ENCODE measurements at regions of chrX and their contacts with region 1.

Region 1: GRCh38 chrX:46796574-46797191 is 37.8 kb upstream of the SLC9A7 start:
- DNase-seq: peak; percentile 51
- H3K4me3 Mint-ChIP-seq: no peak overlapping the region
- H3K27ac Mint-ChIP-seq: no peak overlapping the region
- H3K4me1 Mint-ChIP-seq: peaks cover 18% of the 10 kb centered on the region
- H3K27me3 Mint-ChIP-seq: no peaks in the 10 kb centered on the region

Region 2: GRCh38 chrX:46381630-46382029 is 415.1 kb before region 1 on chrX:
- intact Hi-C with region 1: loop called (anchors 1 kb)
- DNase-seq: peak; percentile 0
- H3K4me3 Mint-ChIP-seq: no peak overlapping the region
- H3K27ac Mint-ChIP-seq: no peak overlapping the region
- H3K4me1 Mint-ChIP-seq: no peaks in the 10 kb centered on the region
- H3K27me3 Mint-ChIP-seq: peaks cover 3% of the 10 kb centered on the region

Region 3: DNA sequence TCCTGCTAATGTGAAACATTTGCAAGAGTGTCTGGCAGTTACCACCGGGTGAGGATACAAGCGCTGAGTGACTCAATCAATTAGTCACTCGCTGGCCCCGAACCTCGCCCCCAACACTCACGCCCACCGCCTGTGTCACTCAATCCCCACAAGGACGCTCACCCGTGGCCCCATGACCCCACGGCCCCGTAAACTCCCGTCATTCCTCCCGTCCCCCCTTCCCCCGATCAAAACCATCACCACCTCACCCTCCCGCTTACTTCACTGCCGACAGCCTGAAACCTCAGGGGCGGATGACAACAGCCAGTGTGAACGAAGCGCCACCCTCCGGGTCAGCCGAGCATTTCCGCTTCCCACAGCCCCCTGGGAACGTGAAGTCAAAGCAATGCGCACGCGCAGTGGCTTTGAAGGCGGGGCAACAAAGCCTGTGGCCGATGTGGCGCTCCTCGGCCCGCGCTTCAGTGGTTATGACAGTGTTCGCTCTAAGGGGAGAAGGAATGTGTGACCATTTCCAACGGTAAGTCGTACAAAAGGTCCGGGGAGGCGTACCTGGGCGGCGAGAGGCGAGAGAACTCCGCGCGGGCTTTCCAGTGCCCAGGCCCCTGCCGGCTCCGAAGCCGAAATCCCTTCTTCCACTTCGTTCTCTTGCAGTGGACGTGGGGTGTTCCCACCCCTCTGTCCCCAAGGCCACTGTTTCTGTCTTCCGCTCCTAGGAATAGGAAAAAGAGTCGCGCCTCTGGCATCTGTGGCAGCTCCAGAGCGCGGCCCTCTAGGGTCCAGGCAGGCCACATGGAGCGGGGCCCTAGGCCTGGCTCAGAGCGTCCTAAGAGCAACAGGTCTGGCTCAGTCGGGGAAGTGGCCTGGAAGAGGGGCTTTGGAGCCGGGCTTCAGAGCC is 251.3 kb before region 1 on chrX and contains the start of gene ZNF674:
- intact Hi-C with region 1: loop called (anchors 2 kb)
- DNase-seq: peak; percentile 90
- H3K4me3 Mint-ChIP-seq: peak within 1 kb of the TSS; percentile 97
- H3K27ac Mint-ChIP-seq: peak within 1 kb of the TSS; percentile 97
- H3K4me1 Mint-ChIP-seq: peaks cover 36% of the 10 kb centered on the region
- H3K27me3 Mint-ChIP-seq: no peaks in the 10 kb centered on the region
- total RNA-seq, gene ZNF674: 1.8 and 3.5 TPM in 2 replicates

Region 4: DNA sequence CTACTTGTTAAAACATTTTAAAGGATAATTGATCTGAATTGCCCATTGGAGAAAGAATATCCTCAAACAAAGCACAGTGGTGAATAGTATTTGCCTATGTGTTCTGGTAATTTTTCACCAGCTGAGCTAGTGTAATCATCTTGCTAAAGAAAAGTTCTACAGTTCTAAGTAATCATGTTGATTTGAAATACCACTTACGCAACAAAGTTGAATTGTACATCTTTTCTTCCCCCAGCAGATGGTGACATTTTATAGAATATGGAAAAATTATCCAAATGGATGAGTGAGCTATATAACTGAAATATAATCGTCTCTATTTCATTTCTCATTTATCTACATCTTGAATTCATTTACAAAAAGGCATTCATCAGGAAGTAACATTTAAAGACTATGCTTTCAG is 241.7 kb before region 1 on chrX:
- intact Hi-C with region 1: loop called (anchors 1 kb)
- DNase-seq: no peak
- H3K4me3 Mint-ChIP-seq: no peak overlapping the region
- H3K27ac Mint-ChIP-seq: no peak overlapping the region
- H3K4me1 Mint-ChIP-seq: no peaks in the 10 kb centered on the region
- H3K27me3 Mint-ChIP-seq: no peaks in the 10 kb centered on the region

Region 5: GRCh38 chrX:46653482-46653881 is 143.2 kb before region 1 on chrX:
- intact Hi-C with region 1: loop called (anchors 1 kb)
- DNase-seq: no peak
- H3K4me3 Mint-ChIP-seq: no peak overlapping the region
- H3K27ac Mint-ChIP-seq: no peak overlapping the region
- H3K4me1 Mint-ChIP-seq: no peaks in the 10 kb centered on the region
- H3K27me3 Mint-ChIP-seq: no peaks in the 10 kb centered on the region

Region 6: DNA sequence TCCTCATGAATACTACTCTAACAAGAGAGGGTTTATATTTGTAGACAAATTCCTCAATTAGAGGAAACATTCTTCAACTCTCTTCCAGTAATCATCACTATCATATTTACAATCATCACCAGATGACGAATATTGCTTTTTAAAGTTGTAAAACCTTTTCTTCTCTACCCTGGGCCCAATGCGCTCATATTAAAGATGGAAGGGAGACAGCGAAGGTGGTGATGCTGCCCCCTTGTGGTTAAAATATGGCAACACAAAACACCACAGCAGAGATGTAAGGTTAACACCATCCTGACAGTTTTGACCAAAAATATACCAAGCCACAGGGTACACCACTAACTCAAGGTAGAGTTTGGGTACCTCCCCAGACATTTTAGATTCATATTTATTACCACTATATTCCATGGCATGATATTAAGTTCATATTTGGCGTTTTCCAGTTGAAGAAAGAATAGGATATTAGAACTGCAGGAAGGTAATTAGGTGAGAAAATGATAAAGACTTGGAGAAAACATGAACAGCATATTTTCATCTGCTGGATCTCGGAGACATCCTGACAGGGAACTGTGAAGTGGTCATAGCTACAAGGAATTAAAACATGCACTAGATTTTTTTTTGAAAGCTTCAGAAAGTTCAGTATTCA is 110.6 kb before region 1 on chrX:
- intact Hi-C with region 1: loop called (anchors 1 kb)
- DNase-seq: peak; percentile 4
- H3K4me3 Mint-ChIP-seq: no peak overlapping the region
- H3K27ac Mint-ChIP-seq: no peak overlapping the region
- H3K4me1 Mint-ChIP-seq: peaks cover 38% of the 10 kb centered on the region
- H3K27me3 Mint-ChIP-seq: no peaks in the 10 kb centered on the region

Region 7: GRCh38 chrX:46836701-46837557 is 40.2 kb after region 1 on chrX and contains the start of gene RP2:
- intact Hi-C with region 1: loop called (anchors 2 kb)
- DNase-seq: peak; percentile 79
- H3K4me3 Mint-ChIP-seq: peak within 1 kb of the TSS; percentile 96
- H3K27ac Mint-ChIP-seq: peak within 1 kb of the TSS; percentile 89
- H3K4me1 Mint-ChIP-seq: no peaks in the 10 kb centered on the region
- H3K27me3 Mint-ChIP-seq: peaks cover 4% of the 10 kb centered on the region
- total RNA-seq, gene RP2: 7.1 and 7.5 TPM in 2 replicates

Region 8: GRCh38 chrX:46865281-46865680 is 68.6 kb after region 1 on chrX:
- intact Hi-C with region 1: no loop called
- DNase-seq: no peak
- H3K4me3 Mint-ChIP-seq: no peak overlapping the region
- H3K27ac Mint-ChIP-seq: no peak overlapping the region
- H3K4me1 Mint-ChIP-seq: no peaks in the 10 kb centered on the region
- H3K27me3 Mint-ChIP-seq: no peaks in the 10 kb centered on the region

Measured in activated T-helper 1 cell treated with anti-CD3 and anti-CD28 coated beads, Interleukin-12 subunit alpha, Interleukin-12 subunit beta, Interleukin-2, Interleukin-4 antibody, amounts not matched to agents 30 ng/mL and 10 ng/mL and 1 ng/mL, durations not matched to agents 14 hours and 24 hours and 36 hours (primary cell).